CD14-positive monocyte (primary cell): ENCODE measurements at regions of chr19 and their contacts with region 1.

Region 1: GRCh38 chr19:16584248-16585141 is 12.3 kb upstream of the SLC35E1 start:
- DNase-seq: peak; percentile 93 to 98 (median 95)
- H3K4me3 ChIP-seq: peak overlapping the region; percentile 54 to 75 (median 55)
- H3K4me3 Mint-ChIP-seq: peak overlapping the region; percentile 83 to 93
- H3K27ac ChIP-seq: peak overlapping the region; percentile 99 to 100
- H3K27ac Mint-ChIP-seq: peak overlapping the region; percentile 96 to 98 (median 97)
- H3K4me1 ChIP-seq: peaks cover 62 to 71% of the 10 kb centered on the region in 2 donors
- H3K4me1 Mint-ChIP-seq: peaks cover 70% of the 10 kb centered on the region
- H3K27me3 ChIP-seq: no peaks in the 10 kb centered on the region
- H3K27me3 Mint-ChIP-seq: peaks cover 0 to 3% (median 2%) of the 10 kb centered on the region in 3 donors
- CTCF ChIP-seq: no peak

Region 2: DNA sequence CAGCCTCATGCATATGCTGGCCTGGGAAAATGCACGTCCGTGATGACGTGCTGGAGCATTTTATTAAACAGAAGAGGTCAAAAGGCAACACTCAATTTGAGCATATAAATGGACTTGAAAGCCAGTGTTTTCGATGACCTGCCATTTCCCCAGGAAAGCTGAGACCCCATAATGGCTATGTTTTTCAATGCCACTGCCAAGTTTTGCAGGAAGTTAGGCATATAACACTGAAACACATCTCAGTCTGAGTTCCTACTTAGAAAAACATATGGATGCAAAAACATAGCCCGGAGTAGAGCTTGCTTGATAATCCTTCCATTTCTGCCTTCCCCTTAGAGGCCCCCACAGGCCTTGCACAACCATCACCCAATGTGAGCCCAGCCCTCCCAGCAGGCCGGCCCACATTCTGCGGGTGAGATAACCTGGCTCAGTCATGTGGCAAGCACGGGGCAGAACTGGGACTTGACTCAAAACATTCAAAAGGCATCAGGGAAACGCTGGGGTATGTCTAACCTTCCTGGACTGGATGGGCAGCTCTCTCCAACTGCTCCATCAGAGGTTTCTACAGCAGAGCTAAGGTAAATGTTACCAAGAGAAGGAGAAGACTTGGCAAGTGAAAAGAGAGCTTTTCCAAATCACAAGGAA is 137.6 kb before region 1 on chr19:
- intact Hi-C with region 1: loop called in 1 of 2 experiments (anchors 10 kb)
- DNase-seq: peak; percentile 74 to 87 (median 81)
- H3K4me3 ChIP-seq: peak overlapping the region in 1 of 3 experiments; percentile 16
- H3K4me3 Mint-ChIP-seq: peak overlapping the region; percentile 40 to 76
- H3K27ac ChIP-seq: peak overlapping the region; percentile 70 to 81
- H3K27ac Mint-ChIP-seq: peak overlapping the region; percentile 96 to 99 (median 98)
- H3K4me1 ChIP-seq: peaks cover 77 to 83% of the 10 kb centered on the region in 2 donors
- H3K4me1 Mint-ChIP-seq: peaks cover 84% of the 10 kb centered on the region
- H3K27me3 ChIP-seq: no peaks in the 10 kb centered on the region
- H3K27me3 Mint-ChIP-seq: no peaks in the 10 kb centered on the region
- CTCF ChIP-seq: no peak

Region 3: GRCh38 chr19:16509141-16510061 is 75.1 kb before region 1 on chr19:
- intact Hi-C with region 1: no loop called
- DNase-seq: no peak
- H3K4me3 ChIP-seq: no peak overlapping the region
- H3K4me3 Mint-ChIP-seq: no peak overlapping the region
- H3K27ac ChIP-seq: no peak overlapping the region
- H3K27ac Mint-ChIP-seq: no peak overlapping the region
- H3K4me1 ChIP-seq: no peaks in the 10 kb centered on the region
- H3K4me1 Mint-ChIP-seq: no peaks in the 10 kb centered on the region
- H3K27me3 ChIP-seq: no peaks in the 10 kb centered on the region
- H3K27me3 Mint-ChIP-seq: peaks cover 0 to 2% (median 0%) of the 10 kb centered on the region in 3 donors
- CTCF ChIP-seq: no peak

Region 4: GRCh38 chr19:16542045-16542909 is 42.2 kb before region 1 on chr19 and contains the start of gene CHERP:
- intact Hi-C with region 1: loop called in 1 of 2 experiments (anchors 5 kb)
- DNase-seq: peak; percentile 91 to 95 (median 93)
- H3K4me3 ChIP-seq: peak within 1 kb of the TSS; percentile 73 to 99 (median 86)
- H3K4me3 Mint-ChIP-seq: peak within 1 kb of the TSS; percentile 87 to 92
- H3K27ac ChIP-seq: peak within 1 kb of the TSS; percentile 63 to 90
- H3K27ac Mint-ChIP-seq: peak within 1 kb of the TSS; percentile 79 to 91 (median 88)
- H3K4me1 ChIP-seq: peaks cover 18 to 26% of the 10 kb centered on the region in 2 donors
- H3K4me1 Mint-ChIP-seq: peaks cover 36% of the 10 kb centered on the region
- H3K27me3 ChIP-seq: no peaks in the 10 kb centered on the region
- H3K27me3 Mint-ChIP-seq: no peaks in the 10 kb centered on the region
- CTCF ChIP-seq: no peak
- polyA plus RNA-seq, gene CHERP: 3.2 to 18.8 (median 5.3) TPM

Region 5: GRCh38 chr19:16628183-16628983 is 43.9 kb after region 1 on chr19 and contains the start of gene MED26:
- intact Hi-C with region 1: loop called in 1 of 2 experiments (anchors 2 kb)
- DNase-seq: peak; percentile 92 to 94 (median 93)
- H3K4me3 ChIP-seq: peak within 1 kb of the TSS; percentile 88 to 92 (median 89)
- H3K4me3 Mint-ChIP-seq: peak within 1 kb of the TSS; percentile 98
- H3K27ac ChIP-seq: peak within 1 kb of the TSS; percentile 67 to 90
- H3K27ac Mint-ChIP-seq: peak within 1 kb of the TSS; percentile 89 to 98 (median 95)
- H3K4me1 ChIP-seq: peaks cover 23 to 37% of the 10 kb centered on the region in 2 donors
- H3K4me1 Mint-ChIP-seq: peaks cover 32% of the 10 kb centered on the region
- H3K27me3 ChIP-seq: no peaks in the 10 kb centered on the region
- H3K27me3 Mint-ChIP-seq: peaks cover 0 to 1% (median 0%) of the 10 kb centered on the region in 3 donors
- CTCF ChIP-seq: no peak
- polyA plus RNA-seq, gene MED26: 1.1 to 7.1 (median 2.1) TPM